Kidney (tissue), 22 donors: ENCODE measurements at regions of chr21 and their contacts with region 1.

Region 1: GRCh38 chr21:32597205-32597604 is 11.9 kb upstream of the TCP10L start:
- DNase-seq: no peak
- H3K4me3 ChIP-seq: no peak overlapping the region
- H3K27ac ChIP-seq: no peak overlapping the region
- H3K4me1 ChIP-seq: no peaks in the 10 kb centered on the region
- H3K27me3 ChIP-seq: no peaks in the 10 kb centered on the region
- CTCF ChIP-seq: no peak

Region 2: GRCh38 chr21:32403201-32403777 is 193.9 kb before region 1 on chr21:
- intact Hi-C with region 1: loop called (anchors 10 kb)
- DNase-seq: peak in 4 of 5 donors; percentile 76 to 93 (median 83)
- H3K4me3 ChIP-seq: no peak overlapping the region
- H3K27ac ChIP-seq: no peak overlapping the region
- H3K4me1 ChIP-seq: peaks cover 0 to 7% (median 0%) of the 10 kb centered on the region in 3 donors
- H3K27me3 ChIP-seq: no peaks in the 10 kb centered on the region
- CTCF ChIP-seq: peak; percentile 61

Region 3: GRCh38 chr21:32475164-32475812 is 121.9 kb before region 1 on chr21:
- intact Hi-C with region 1: no loop called
- DNase-seq: peak in 2 of 5 donors; percentile 29 to 79
- H3K4me3 ChIP-seq: no peak overlapping the region
- H3K27ac ChIP-seq: no peak overlapping the region
- H3K4me1 ChIP-seq: no peaks in the 10 kb centered on the region
- H3K27me3 ChIP-seq: no peaks in the 10 kb centered on the region
- CTCF ChIP-seq: no peak

Region 4: GRCh38 chr21:32538147-32538792 is 58.9 kb before region 1 on chr21:
- intact Hi-C with region 1: no loop called
- DNase-seq: no peak
- H3K4me3 ChIP-seq: no peak overlapping the region
- H3K27ac ChIP-seq: no peak overlapping the region
- H3K4me1 ChIP-seq: no peaks in the 10 kb centered on the region
- H3K27me3 ChIP-seq: no peaks in the 10 kb centered on the region
- CTCF ChIP-seq: no peak